ENCODE measurements at regions of chr3 and their contacts with region 1.

Region 1: DNA sequence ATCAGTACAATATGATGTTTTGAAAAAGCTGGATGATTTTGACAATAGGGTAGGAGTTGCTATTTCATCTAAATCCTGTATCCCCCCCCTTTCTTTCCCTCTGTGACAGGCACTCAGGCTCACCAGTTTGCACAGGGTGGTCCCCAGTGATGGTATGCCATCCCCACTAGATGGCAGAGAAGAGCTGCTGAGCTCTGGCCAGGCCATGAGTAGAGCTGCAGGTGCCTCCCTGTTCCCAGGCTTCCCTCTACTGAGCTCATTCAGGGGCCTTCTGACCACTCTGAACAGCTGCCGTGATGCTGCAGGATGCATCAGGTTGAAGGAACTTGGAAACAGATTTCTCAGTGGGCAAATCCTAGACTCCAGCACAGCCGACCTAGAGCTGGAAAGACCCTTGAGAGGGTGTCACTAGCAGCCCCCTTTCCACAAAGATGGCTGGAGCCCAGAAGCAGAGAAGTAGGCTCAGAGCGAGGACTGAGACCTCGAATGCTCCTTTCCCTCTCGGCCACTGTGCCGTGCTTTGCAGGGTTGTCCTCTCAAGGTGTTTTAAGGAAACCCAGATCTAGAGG is 45.1 kb downstream of the EFCAB12 start:
- DNase-seq: peak; percentile 71
- H3K4me3 ChIP-seq: no peak overlapping the region
- H3K27ac ChIP-seq: no peak overlapping the region
- H3K4me1 ChIP-seq: peaks cover 19% of the 10 kb centered on the region
- H3K27me3 ChIP-seq: no peaks in the 10 kb centered on the region
- CTCF ChIP-seq: peak; percentile 93 to 95
- POLR2A ChIP-seq: peak; percentile 34

Region 2: GRCh38 chr3:129185783-129186182 is 197.6 kb before region 1 on chr3:
- CTCF ChIA-PET with region 1: no interaction called
- POLR2A ChIA-PET with region 1: no interaction called
- dilution Hi-C with region 1: no loop called
- intact Hi-C with region 1: no loop called
- DNase-seq: no peak
- H3K4me3 ChIP-seq: no peak overlapping the region
- H3K27ac ChIP-seq: no peak overlapping the region
- H3K4me1 ChIP-seq: peaks cover 17% of the 10 kb centered on the region
- H3K27me3 ChIP-seq: no peaks in the 10 kb centered on the region
- CTCF ChIP-seq: no peak
- POLR2A ChIP-seq: no peak

Region 3: DNA sequence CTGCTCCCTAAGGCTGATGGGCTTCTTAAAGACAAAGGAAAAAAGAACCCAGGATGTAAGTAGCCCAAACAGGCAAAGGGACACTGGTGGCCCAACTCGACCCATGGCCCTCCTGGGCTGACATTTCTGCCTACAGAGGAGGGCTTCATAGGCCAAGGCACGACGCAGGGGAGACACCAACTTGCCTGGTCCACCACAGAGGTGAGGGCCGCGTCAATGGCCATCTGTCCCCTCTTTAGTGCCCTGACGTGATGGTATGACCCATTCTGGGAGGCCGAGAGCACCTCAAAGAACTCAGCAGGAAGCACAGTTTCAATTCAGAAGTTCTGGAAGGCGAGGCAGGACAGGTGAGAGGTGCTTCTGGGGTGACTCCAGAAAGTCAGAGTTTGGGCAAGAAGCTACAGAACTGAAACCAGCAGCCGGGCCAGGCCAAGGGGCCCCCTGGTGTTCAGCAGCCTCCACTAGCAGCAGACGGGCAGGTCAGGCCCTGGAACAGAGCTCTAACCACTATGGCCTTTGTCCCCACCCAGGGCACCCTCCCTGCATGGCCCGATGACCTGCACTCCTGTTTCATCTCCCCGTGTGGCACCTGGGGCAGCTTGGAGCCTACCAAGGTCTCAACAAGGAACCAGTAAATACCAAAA is 59.6 kb before region 1 on chr3:
- CTCF ChIA-PET with region 1: interaction called, 13 read pairs
- POLR2A ChIA-PET with region 1: no interaction called
- dilution Hi-C with region 1: no loop called
- intact Hi-C with region 1: no loop called
- DNase-seq: no peak
- H3K4me3 ChIP-seq: no peak overlapping the region
- H3K27ac ChIP-seq: no peak overlapping the region
- H3K4me1 ChIP-seq: no peaks in the 10 kb centered on the region
- H3K27me3 ChIP-seq: no peaks in the 10 kb centered on the region
- CTCF ChIP-seq: peak in 1 of 2 donors; percentile 32
- POLR2A ChIP-seq: no peak

Region 4: DNA sequence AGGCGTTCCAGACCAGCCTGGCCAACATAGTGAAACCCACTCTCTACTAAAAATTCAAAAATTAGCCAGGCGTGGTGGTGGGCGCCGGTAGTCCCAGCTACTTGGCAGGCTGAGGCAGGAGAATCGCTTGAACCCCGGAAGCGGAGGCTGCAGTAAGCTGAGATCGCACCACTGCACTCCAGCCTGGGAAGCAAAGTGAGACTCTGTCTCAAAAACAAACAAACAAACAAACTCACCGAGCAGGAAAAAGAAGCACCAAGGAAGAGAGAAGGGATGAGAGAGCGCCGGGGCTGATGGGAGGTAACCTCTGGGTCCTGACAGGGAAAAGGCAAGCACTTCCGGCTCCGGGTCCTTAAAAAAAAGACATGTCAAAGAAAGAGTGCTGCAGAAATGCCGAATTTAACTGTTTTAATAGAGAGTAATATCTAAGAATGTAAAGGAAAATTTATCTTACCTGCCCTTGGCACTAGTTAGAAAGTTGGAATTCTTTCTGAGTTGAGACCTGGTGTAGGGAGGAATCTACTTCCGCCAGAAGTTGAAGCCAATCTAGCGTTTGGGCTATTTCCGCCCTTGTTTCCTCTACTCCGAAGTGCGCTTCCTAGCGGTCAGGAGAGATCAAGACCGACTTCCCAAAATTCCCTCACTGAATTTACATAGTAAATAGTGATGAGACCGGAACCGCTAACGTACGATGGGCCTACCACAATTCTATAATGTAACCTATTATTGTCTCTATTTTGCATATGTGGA is 15.9 kb after region 1 on chr3:
- CTCF ChIA-PET with region 1: interaction called, 22 read pairs
- POLR2A ChIA-PET with region 1: no interaction called
- dilution Hi-C with region 1: no loop called
- intact Hi-C with region 1: loop called (anchors 2 kb)
- DNase-seq: peak; percentile 95
- H3K4me3 ChIP-seq: peak overlapping the region; percentile 74 to 82 (median 81)
- H3K27ac ChIP-seq: peak overlapping the region; percentile 84
- H3K4me1 ChIP-seq: peaks cover 4% of the 10 kb centered on the region
- H3K27me3 ChIP-seq: no peaks in the 10 kb centered on the region
- CTCF ChIP-seq: peak; percentile 70 to 84
- POLR2A ChIP-seq: peak; percentile 64

Region 5: DNA sequence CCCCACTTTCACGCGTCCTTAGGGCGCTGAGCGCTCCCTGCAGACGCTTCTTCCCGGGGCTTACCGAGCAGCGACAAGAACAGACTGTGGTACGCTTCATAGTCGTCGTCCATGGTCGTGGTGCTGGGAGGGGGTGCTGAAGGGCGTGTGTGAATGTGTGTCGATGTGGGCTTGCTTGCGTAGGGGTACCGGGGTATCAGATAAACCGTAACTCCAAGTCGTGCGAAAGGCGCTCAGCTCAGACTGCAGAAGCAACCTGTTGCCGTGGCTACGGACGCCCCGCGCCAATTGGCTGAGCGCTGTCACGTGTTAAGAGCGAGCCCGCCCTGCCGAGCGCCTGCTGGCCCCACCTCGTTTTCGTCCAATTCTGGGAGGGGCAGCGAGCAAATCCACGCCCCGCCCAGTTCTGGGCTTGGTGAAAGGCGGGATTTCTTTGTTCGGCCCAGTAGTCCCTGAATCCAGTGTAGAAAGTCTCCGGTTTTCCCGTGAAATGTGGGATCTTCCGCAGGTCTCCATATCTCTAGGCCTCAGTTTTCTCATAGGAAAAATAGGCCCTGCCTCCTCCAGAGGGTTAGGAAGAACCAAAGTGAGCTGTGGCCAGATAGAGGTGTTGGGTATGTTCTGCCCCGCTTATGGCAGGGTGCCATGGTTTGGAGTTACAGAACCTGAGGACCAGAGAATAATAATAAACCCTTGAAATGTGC is 45.2 kb after region 1 on chr3 and contains the start of gene EFCAB12:
- CTCF ChIA-PET with region 1: interaction called, 27 read pairs
- POLR2A ChIA-PET with region 1: no interaction called
- dilution Hi-C with region 1: no loop called
- intact Hi-C with region 1: loop called (anchors 2 kb)
- DNase-seq: peak; percentile 97
- H3K4me3 ChIP-seq: peak within 1 kb of the TSS; percentile 17 to 45 (median 40)
- H3K27ac ChIP-seq: no peak within 1 kb of the TSS
- H3K4me1 ChIP-seq: peaks cover 6% of the 10 kb centered on the region
- H3K27me3 ChIP-seq: peaks cover 0 to 4% of the 10 kb centered on the region in 2 experiments
- CTCF ChIP-seq: no peak
- POLR2A ChIP-seq: no peak
- total RNA-seq, gene EFCAB12: 0.25 and 0.49 TPM in 2 replicates

Region 6: DNA sequence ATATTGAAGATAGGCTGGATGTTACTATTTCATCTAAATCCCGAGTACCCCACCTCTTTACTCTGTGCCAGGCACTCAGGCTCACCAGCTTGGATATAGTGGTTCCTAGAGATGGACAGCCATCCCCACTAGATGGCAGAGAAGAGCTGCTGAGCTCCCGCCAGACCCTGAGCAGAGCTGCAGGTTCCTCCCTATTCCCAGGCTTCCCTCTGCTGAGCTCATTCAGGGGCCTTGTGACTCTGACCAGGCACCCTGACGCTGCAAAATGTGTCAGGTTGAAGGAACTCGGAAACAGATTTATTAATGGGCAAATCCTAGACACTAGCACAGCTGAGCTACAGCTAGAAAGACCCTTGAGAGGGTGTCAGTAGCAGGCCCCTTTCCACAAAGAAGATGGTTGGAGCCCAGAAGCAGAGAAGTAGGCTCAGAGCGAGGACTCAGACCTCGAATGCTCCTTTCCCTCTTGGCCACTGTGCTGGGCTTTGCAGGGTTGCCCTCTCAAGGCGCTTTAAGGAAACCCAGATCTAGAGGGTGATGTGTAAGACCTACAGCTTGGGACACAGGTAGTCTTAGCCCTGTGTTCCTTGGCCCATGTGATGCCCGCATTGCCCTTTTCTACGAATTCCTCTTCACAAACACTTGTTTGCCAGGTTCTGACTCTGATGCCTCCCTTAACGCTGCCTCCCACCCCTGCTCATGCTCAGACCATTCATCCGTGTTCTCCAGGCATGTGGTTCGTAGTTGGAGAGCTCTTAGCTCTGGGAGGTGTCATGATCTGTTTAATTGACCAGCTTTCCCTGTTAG is 107.1 kb after region 1 on chr3:
- CTCF ChIA-PET with region 1: interaction called, 32 read pairs
- POLR2A ChIA-PET with region 1: no interaction called
- dilution Hi-C with region 1: no loop called
- intact Hi-C with region 1: loop called (anchors 1 kb)
- DNase-seq: peak; percentile 90
- H3K4me3 ChIP-seq: no peak overlapping the region
- H3K27ac ChIP-seq: peak overlapping the region; percentile 81
- H3K4me1 ChIP-seq: peaks cover 23% of the 10 kb centered on the region
- H3K27me3 ChIP-seq: no peaks in the 10 kb centered on the region
- CTCF ChIP-seq: peak; percentile 86 to 90
- POLR2A ChIP-seq: no peak

Region 7: DNA sequence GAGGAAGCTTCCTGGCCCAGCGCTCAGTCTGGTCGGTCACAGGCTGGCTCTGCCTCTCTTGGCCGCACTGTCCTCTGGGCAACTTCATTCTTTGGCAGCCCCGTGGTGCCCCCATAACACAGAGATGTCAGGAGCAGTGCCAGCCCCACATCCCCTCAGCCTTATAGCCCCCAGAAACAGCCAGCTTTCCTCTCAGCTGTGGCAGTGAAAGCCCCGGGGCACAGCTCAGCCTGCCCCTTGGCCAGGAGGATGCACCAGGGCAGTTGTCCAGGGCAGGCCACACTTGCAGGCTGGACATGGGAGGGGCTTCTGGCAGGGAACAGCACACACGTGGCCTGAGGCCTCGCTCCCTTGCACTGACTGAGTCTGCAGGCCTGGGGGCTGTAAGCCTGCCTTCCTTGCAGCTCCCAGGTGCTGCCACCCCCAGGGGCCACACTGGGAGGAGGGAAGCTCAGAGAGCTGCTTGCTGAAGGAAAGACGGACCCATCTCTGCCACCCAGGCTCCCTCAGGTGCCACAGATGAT is 134.7 kb after region 1 on chr3:
- CTCF ChIA-PET with region 1: no interaction called
- POLR2A ChIA-PET with region 1: no interaction called
- dilution Hi-C with region 1: no loop called
- intact Hi-C with region 1: no loop called
- DNase-seq: no peak
- H3K4me3 ChIP-seq: no peak overlapping the region
- H3K27ac ChIP-seq: no peak overlapping the region
- H3K4me1 ChIP-seq: no peaks in the 10 kb centered on the region
- H3K27me3 ChIP-seq: no peaks in the 10 kb centered on the region
- CTCF ChIP-seq: no peak
- POLR2A ChIP-seq: no peak

Region 8: DNA sequence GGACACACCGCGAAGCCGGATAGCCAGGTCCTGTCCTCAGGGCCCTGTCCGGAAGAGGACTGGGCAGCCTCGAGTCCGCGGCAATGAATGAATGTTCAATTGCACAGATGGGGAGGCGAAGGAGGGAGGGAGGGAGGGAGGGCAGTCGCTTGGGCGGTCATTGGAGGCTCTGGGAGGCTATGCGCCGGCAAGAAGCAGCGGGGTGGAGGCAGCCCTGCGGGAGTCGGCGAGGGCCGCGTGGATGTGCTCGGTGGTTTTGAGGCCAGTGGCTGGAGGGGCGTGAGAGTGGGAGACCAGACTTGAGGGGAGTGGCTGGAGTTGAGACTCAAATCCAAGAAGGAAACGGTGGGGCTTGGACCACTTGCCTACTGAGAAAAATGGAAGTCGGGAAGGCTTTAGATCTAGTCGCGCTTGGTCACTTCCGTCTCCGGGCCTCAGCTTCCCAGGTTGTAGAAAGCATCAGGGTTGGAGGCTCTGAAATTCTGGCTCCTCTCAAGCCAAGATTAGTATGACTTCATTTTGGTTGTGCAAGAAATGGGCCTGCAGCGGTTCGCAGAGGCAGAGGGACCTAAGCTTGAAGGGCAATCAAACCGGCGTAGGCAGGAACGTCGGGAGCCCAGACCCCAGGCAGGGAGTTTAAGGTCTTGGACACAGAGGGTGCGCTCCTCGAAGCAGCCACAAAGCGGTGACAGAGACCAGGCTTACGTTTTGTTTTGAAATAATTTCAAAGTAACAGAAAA is 244.2 kb after region 1 on chr3:
- CTCF ChIA-PET with region 1: interaction called, 4 read pairs
- POLR2A ChIA-PET with region 1: no interaction called
- dilution Hi-C with region 1: no loop called
- intact Hi-C with region 1: loop called (anchors 10 kb)
- DNase-seq: peak; percentile 90
- H3K4me3 ChIP-seq: peak overlapping the region in 2 of 3 experiments; percentile 11 to 42
- H3K27ac ChIP-seq: peak overlapping the region; percentile 85
- H3K4me1 ChIP-seq: peaks cover 50% of the 10 kb centered on the region
- H3K27me3 ChIP-seq: no peaks in the 10 kb centered on the region
- CTCF ChIP-seq: peak; percentile 86 to 87
- POLR2A ChIP-seq: peak; percentile 51

Region 9: DNA sequence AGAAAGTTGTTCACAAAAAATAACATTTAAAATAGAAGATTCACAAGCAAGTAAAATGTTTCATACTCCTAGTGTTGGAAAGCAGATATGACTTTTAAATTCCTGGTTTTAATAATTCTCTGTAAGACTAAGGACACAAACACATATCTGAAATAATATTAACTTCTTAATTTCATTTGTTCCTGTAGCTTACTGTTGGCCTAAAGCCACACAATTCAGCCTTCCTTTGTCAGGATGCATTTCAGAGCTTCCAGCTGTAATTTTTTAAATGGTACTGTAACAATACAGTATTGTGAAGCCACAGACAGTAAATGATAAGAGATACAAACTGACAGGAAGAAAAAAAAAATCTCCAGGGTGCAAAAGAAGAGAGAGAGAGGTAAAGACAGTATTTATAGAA is 425.9 kb after region 1 on chr3:
- CTCF ChIA-PET with region 1: no interaction called
- POLR2A ChIA-PET with region 1: no interaction called
- dilution Hi-C with region 1: no loop called
- intact Hi-C with region 1: no loop called
- DNase-seq: peak; percentile 49
- H3K4me3 ChIP-seq: no peak overlapping the region
- H3K27ac ChIP-seq: no peak overlapping the region
- H3K4me1 ChIP-seq: peaks cover 7% of the 10 kb centered on the region
- H3K27me3 ChIP-seq: no peaks in the 10 kb centered on the region
- CTCF ChIP-seq: no peak
- POLR2A ChIP-seq: no peak

Measured in endothelial cell of umbilical vein (primary cell).